CD8-positive, alpha-beta T cell (primary cell): ENCODE measurements at regions of chr1 and their contacts with region 1.

Region 1: GRCh38 chr1:21255278-21255942 is 34.9 kb downstream of the ECE1 start:
- DNase-seq: peak; percentile 73 to 92 (median 83)
- ATAC-seq: peak; percentile 82
- H3K4me3 ChIP-seq: no peak overlapping the region
- H3K4me3 Mint-ChIP-seq: no peak overlapping the region
- H3K27ac ChIP-seq: no peak overlapping the region
- H3K27ac Mint-ChIP-seq: peak overlapping the region; percentile 77
- H3K4me1 ChIP-seq: peaks cover 21% of the 10 kb centered on the region
- H3K4me1 Mint-ChIP-seq: peaks cover 29% of the 10 kb centered on the region
- H3K27me3 ChIP-seq: no peaks in the 10 kb centered on the region
- H3K27me3 Mint-ChIP-seq: no peaks in the 10 kb centered on the region
- CTCF ChIP-seq: peak; percentile 63

Region 2: DNA sequence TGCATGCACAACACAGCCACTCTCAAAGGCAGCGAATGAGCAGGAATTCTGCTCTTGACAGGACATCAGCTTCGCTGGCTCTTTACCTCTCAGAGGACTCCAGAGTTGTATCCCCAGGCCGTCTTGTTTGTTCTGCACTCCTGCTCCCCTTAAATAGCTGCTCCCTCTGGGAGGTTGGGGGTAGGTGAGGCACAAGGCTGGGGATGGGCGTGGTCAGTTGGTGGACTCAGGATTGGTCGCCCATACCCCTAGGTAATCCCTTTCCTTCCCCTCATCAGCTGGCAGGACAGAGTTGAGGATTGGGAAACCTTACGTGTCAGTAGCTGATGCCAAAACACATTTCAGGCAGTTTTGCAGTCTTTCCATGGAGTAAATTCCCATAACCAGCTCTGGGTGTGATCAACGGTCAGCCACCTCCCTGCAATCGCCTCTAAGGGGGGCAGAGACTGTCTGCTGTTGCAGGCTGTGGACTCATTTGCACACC is 1275.9 kb before region 1 on chr1 and contains the start of gene PLA2G2A:
- CTCF ChIA-PET with region 1: no interaction called
- POLR2A ChIA-PET with region 1: no interaction called
- intact Hi-C with region 1: no loop called
- DNase-seq: peak in 1 of 9 experiments; percentile 27
- ATAC-seq: no peak
- H3K4me3 ChIP-seq: no peak within 1 kb of the TSS
- H3K4me3 Mint-ChIP-seq: no peak within 1 kb of the TSS
- H3K27ac ChIP-seq: no peak within 1 kb of the TSS
- H3K27ac Mint-ChIP-seq: no peak within 1 kb of the TSS
- H3K4me1 ChIP-seq: no peaks in the 10 kb centered on the region
- H3K4me1 Mint-ChIP-seq: no peaks in the 10 kb centered on the region
- H3K27me3 ChIP-seq: no peaks in the 10 kb centered on the region
- H3K27me3 Mint-ChIP-seq: peaks cover 31% of the 10 kb centered on the region
- CTCF ChIP-seq: no peak
- total RNA-seq, gene PLA2G2A: not detected

Region 3: GRCh38 chr1:20921285-20921684 is 334.1 kb before region 1 on chr1:
- CTCF ChIA-PET with region 1: no interaction called
- POLR2A ChIA-PET with region 1: no interaction called
- intact Hi-C with region 1: no loop called
- DNase-seq: no peak
- ATAC-seq: no peak
- H3K4me3 ChIP-seq: no peak overlapping the region
- H3K4me3 Mint-ChIP-seq: no peak overlapping the region
- H3K27ac ChIP-seq: no peak overlapping the region
- H3K27ac Mint-ChIP-seq: no peak overlapping the region
- H3K4me1 ChIP-seq: no peaks in the 10 kb centered on the region
- H3K4me1 Mint-ChIP-seq: no peaks in the 10 kb centered on the region
- H3K27me3 ChIP-seq: no peaks in the 10 kb centered on the region
- H3K27me3 Mint-ChIP-seq: no peaks in the 10 kb centered on the region
- CTCF ChIP-seq: no peak

Region 4: DNA sequence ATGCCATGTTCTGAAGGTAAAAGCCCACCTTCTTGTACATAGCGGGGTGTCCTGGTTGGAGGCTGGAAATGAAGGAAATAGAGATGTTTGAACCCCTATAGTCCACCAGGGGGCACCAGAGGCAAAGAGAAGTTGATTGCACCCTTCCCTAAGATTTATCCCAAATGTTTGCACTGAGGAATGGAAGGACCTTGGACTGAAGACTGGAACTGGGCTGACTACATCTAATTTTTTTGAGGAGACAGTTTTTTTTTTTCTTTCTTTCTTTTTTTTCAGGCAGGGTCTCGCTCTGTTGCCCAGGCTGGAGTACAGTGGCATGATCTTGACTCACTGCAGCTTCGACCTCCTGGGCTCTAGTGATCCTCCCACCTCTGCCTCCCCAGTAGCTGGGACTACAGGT is 23.4 kb before region 1 on chr1:
- CTCF ChIA-PET with region 1: interaction called, 61 read pairs
- POLR2A ChIA-PET with region 1: no interaction called
- intact Hi-C with region 1: loop called in 1 of 2 experiments (anchors 1 kb)
- DNase-seq: peak in 4 of 9 experiments; percentile 32 to 69 (median 52)
- ATAC-seq: peak; percentile 73
- H3K4me3 ChIP-seq: no peak overlapping the region
- H3K4me3 Mint-ChIP-seq: no peak overlapping the region
- H3K27ac ChIP-seq: no peak overlapping the region
- H3K27ac Mint-ChIP-seq: no peak overlapping the region
- H3K4me1 ChIP-seq: no peaks in the 10 kb centered on the region
- H3K4me1 Mint-ChIP-seq: no peaks in the 10 kb centered on the region
- H3K27me3 ChIP-seq: no peaks in the 10 kb centered on the region
- H3K27me3 Mint-ChIP-seq: no peaks in the 10 kb centered on the region
- CTCF ChIP-seq: peak; percentile 90

Region 5: DNA sequence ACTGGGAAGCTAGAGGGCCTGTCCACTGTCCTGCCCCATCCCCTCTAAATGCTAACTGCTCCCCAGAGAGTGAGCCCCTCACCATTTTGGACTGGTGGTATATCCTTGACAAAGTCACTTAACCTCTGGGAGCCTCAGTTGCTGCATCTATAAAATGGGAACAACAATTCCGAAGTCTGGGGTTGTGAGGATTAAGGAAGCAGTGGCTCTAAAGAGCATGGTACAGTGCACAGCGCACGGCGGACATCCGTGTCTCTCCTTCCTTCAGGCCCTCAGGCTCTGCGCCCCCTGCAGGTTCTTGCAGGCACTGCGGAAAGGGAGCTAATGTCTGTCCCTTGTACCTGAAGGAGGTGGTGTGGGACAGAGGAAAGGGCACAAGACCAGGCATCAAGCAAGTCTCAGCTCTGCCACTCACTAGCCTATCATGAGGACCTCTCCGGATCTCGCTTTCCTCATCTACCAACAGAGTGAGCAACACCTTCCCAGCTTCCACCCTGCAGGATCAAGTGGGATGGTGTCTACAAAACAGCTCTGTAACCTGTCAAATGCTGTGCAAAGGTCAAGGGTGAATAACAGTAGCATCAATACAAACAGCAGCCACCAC is 14.8 kb after region 1 on chr1:
- CTCF ChIA-PET with region 1: interaction called, 125 read pairs
- POLR2A ChIA-PET with region 1: no interaction called
- intact Hi-C with region 1: no loop called
- DNase-seq: peak; percentile 68 to 88 (median 80)
- ATAC-seq: peak; percentile 97
- H3K4me3 ChIP-seq: no peak overlapping the region
- H3K4me3 Mint-ChIP-seq: no peak overlapping the region
- H3K27ac ChIP-seq: no peak overlapping the region
- H3K27ac Mint-ChIP-seq: no peak overlapping the region
- H3K4me1 ChIP-seq: no peaks in the 10 kb centered on the region
- H3K4me1 Mint-ChIP-seq: peaks cover 12% of the 10 kb centered on the region
- H3K27me3 ChIP-seq: no peaks in the 10 kb centered on the region
- H3K27me3 Mint-ChIP-seq: no peaks in the 10 kb centered on the region
- CTCF ChIP-seq: peak; percentile 92

Region 6: DNA sequence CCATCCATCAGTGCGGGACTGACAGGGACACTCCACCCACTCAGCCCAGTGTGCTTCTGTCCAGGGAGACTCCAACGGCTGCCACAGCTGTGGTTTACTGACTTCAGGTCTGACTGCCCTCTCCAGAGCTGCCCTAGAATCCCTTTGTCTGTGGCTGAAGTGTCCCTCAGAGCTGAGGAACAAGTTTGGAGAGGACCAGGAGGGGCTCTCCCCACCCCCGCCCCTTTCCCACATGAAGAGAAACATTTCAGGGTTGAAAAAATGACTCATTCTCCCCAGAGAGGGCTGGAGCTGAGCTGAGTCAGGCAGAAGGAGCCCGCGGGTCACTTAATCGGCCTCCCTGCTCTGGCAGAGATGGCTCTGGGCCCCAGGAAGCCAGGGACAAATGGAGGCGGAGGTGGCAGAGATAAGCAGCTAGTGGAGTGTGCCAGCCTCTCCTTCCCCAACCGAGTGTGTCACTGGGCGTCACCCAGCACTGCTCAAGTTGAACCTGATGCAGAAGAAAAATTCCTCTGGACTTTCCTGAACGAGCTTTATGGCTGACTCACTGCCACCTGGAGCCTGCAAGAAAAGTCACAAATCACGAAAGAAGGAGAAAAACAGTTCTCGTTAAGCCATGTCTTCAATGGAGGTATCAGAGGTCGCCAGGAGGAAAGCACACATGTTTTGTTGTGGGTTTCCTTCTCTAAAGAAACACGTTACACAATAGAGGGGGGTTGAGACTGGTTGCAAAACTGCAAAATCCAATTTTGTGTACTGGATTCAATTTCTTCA is 69.1 kb after region 1 on chr1:
- CTCF ChIA-PET with region 1: interaction called, 13 read pairs
- POLR2A ChIA-PET with region 1: no interaction called
- intact Hi-C with region 1: no loop called
- DNase-seq: peak in 8 of 9 experiments; percentile 26 to 71 (median 64)
- ATAC-seq: peak; percentile 64
- H3K4me3 ChIP-seq: peak overlapping the region in 1 of 2 experiments; percentile 4
- H3K4me3 Mint-ChIP-seq: peak overlapping the region; percentile 76
- H3K27ac ChIP-seq: peak overlapping the region; percentile 13 to 51
- H3K27ac Mint-ChIP-seq: peak overlapping the region; percentile 96
- H3K4me1 ChIP-seq: peaks cover 61% of the 10 kb centered on the region
- H3K4me1 Mint-ChIP-seq: peaks cover 74% of the 10 kb centered on the region
- H3K27me3 ChIP-seq: no peaks in the 10 kb centered on the region
- H3K27me3 Mint-ChIP-seq: no peaks in the 10 kb centered on the region
- CTCF ChIP-seq: no peak

Region 7: GRCh38 chr1:21355956-21356355 is 100.5 kb after region 1 on chr1:
- CTCF ChIA-PET with region 1: interaction called, 24 read pairs
- POLR2A ChIA-PET with region 1: no interaction called
- intact Hi-C with region 1: no loop called
- DNase-seq: no peak
- ATAC-seq: no peak
- H3K4me3 ChIP-seq: no peak overlapping the region
- H3K4me3 Mint-ChIP-seq: no peak overlapping the region
- H3K27ac ChIP-seq: no peak overlapping the region
- H3K27ac Mint-ChIP-seq: no peak overlapping the region
- H3K4me1 ChIP-seq: no peaks in the 10 kb centered on the region
- H3K4me1 Mint-ChIP-seq: peaks cover 3% of the 10 kb centered on the region
- H3K27me3 ChIP-seq: no peaks in the 10 kb centered on the region
- H3K27me3 Mint-ChIP-seq: no peaks in the 10 kb centered on the region
- CTCF ChIP-seq: no peak